Heart left ventricle (tissue), 16 donors: ENCODE measurements at regions of chr2 and their contacts with region 1.

Region 1: GRCh38 chr2:68828887-68829708 is 42.1 kb downstream of the BMP10 start:
- DNase-seq: peak; percentile 91 to 97 (median 94)
- ATAC-seq: peak; percentile 82 to 86 (median 83)
- H3K4me3 ChIP-seq: peak overlapping the region in 9 of 12 donors; percentile 3 to 30 (median 15)
- H3K27ac ChIP-seq: peak overlapping the region; percentile 53 to 85 (median 74)
- H3K4me1 ChIP-seq: peaks cover 11 to 84% (median 44%) of the 10 kb centered on the region in 12 donors
- H3K27me3 ChIP-seq: no peaks in the 10 kb centered on the region
- CTCF ChIP-seq: peak in 1 of 12 donors; percentile 10
- POLR2A ChIP-seq: no peak

Region 2: DNA sequence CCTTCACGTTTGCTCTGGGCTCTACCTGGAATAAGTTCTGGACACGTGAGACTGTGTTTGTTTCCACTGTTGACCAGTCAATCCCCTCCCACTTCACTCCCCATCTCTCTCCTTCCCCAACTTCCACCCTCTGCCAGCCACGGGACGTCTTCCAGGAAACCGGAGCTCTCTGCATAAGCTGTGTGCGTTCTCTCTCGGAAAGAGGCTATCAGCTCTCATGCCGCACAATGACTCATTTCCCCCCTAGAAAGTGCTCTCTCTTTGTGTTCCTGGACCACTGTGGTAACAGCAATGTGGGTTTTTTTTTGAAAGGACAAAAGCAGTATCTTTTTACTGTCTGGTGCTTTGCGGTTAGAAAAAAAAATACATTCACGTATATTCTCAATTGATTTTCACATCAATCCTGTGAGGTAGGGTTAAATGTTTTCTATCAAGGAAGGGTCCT is 175.5 kb before region 1 on chr2:
- intact Hi-C with region 1: no loop called
- DNase-seq: no peak
- ATAC-seq: peak in 2 of 4 donors; percentile 66 to 70
- H3K4me3 ChIP-seq: no peak overlapping the region
- H3K27ac ChIP-seq: peak overlapping the region in 1 of 12 donors; percentile 10
- H3K4me1 ChIP-seq: peaks cover 0 to 15% (median 0%) of the 10 kb centered on the region in 12 donors
- H3K27me3 ChIP-seq: peaks cover 0 to 19% (median 0%) of the 10 kb centered on the region in 9 donors
- CTCF ChIP-seq: no peak
- POLR2A ChIP-seq: no peak

Region 3: GRCh38 chr2:68766376-68766845 is 62.7 kb before region 1 on chr2:
- intact Hi-C with region 1: loop called in 6 of 10 experiments (anchors 5 to 10 kb)
- DNase-seq: peak in 3 of 5 donors; percentile 33 to 47 (median 43)
- ATAC-seq: peak in 3 of 4 donors; percentile 58 to 88 (median 65)
- H3K4me3 ChIP-seq: peak overlapping the region in 1 of 12 donors; percentile 0
- H3K27ac ChIP-seq: peak overlapping the region in 5 of 12 donors; percentile 8 to 84 (median 48)
- H3K4me1 ChIP-seq: peaks cover 7 to 100% (median 26%) of the 10 kb centered on the region in 12 donors
- H3K27me3 ChIP-seq: no peaks in the 10 kb centered on the region
- CTCF ChIP-seq: no peak
- POLR2A ChIP-seq: no peak

Region 4: GRCh38 chr2:68774569-68775271 is 54.4 kb before region 1 on chr2:
- intact Hi-C with region 1: loop called in 7 of 10 experiments (anchors 5 to 10 kb)
- DNase-seq: peak; percentile 74 to 86 (median 79)
- ATAC-seq: peak; percentile 60 to 88 (median 86)
- H3K4me3 ChIP-seq: peak overlapping the region in 11 of 12 donors; percentile 39 to 67 (median 57)
- H3K27ac ChIP-seq: peak overlapping the region; percentile 69 to 91 (median 88)
- H3K4me1 ChIP-seq: peaks cover 12 to 99% (median 40%) of the 10 kb centered on the region in 12 donors
- H3K27me3 ChIP-seq: no peaks in the 10 kb centered on the region
- CTCF ChIP-seq: no peak
- POLR2A ChIP-seq: peak in 1 of 2 donors; percentile 22